ENCODE measurements at regions of chr1 and their contacts with region 1.

Region 1: GRCh38 chr1:25608488-25609178 is 8.0 kb upstream of the MAN1C1 start:
- DNase-seq: peak; percentile 81
- H3K4me3 Mint-ChIP-seq: no peak overlapping the region
- H3K27ac Mint-ChIP-seq: no peak overlapping the region
- H3K4me1 Mint-ChIP-seq: no peaks in the 10 kb centered on the region
- H3K27me3 Mint-ChIP-seq: peaks cover 59% of the 10 kb centered on the region
- CTCF ChIP-seq: peak; percentile 35

Region 2: GRCh38 chr1:25688390-25689161 is 79.9 kb after region 1 on chr1:
- CTCF ChIA-PET with region 1: no interaction called
- POLR2A ChIA-PET with region 1: no interaction called
- intact Hi-C with region 1: no loop called
- DNase-seq: peak; percentile 30
- H3K4me3 Mint-ChIP-seq: no peak overlapping the region
- H3K27ac Mint-ChIP-seq: no peak overlapping the region
- H3K4me1 Mint-ChIP-seq: no peaks in the 10 kb centered on the region
- H3K27me3 Mint-ChIP-seq: peaks cover 47% of the 10 kb centered on the region
- CTCF ChIP-seq: no peak

Region 3: DNA sequence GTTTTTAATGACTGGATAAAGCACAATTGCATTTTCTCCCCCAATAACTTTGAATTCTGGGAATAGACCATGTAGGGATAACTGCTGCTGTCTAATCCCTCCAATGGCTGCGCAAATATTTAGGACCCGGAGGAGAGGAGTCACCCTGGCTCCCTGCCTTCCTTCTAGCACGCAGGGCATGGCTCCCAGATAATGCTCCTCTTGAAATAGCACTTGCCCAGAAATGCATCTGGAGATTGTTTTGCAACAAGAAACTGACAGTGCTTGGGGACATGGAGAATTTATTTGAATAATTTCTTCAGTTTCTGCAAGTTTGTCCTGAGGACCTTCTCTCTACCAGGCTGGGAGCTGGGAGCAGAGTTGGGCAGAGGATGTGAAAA is 91.5 kb after region 1 on chr1:
- CTCF ChIA-PET with region 1: no interaction called
- POLR2A ChIA-PET with region 1: no interaction called
- intact Hi-C with region 1: no loop called
- DNase-seq: no peak
- H3K4me3 Mint-ChIP-seq: no peak overlapping the region
- H3K27ac Mint-ChIP-seq: no peak overlapping the region
- H3K4me1 Mint-ChIP-seq: peaks cover 9% of the 10 kb centered on the region
- H3K27me3 Mint-ChIP-seq: peaks cover 17% of the 10 kb centered on the region
- CTCF ChIP-seq: no peak

Region 4: DNA sequence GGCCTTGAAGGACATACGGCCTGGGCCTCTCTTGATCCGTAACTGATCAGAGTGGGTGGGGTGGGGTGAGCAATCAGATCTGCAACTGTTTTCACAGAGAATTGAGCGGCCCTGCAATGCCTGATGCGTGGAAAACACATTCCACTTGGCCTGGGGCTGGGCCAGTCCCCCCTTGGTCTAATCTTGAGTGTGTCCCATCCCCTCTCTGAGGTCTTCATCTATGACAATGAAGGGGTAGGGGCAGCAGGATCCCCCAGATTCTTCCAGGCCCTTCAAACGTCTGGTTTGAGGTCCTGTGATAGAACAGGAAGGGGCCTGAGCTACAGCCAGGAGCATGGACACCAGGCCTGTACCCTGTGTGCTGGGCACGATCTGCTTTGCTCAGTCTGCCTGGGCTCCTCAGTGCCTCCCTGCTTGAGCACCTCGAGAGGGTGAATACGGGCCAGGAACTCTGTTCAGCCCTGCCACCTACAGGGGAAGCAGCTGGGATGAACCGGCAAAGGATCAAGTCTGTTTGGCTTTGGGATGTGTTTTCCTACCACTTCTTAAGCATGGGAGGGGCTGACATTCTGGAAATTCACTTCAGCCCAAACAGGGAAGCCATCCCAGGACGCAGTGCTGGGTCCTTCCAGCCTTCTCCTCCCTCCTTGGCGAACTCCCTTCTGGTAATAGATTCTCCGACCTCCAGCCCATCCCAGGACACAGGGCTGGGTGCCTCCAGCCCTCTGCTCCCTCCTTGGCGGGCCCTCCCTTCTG is 135.4 kb after region 1 on chr1:
- CTCF ChIA-PET with region 1: no interaction called
- POLR2A ChIA-PET with region 1: no interaction called
- intact Hi-C with region 1: loop called (anchors 1 kb)
- DNase-seq: peak; percentile 45
- H3K4me3 Mint-ChIP-seq: no peak overlapping the region
- H3K27ac Mint-ChIP-seq: no peak overlapping the region
- H3K4me1 Mint-ChIP-seq: peaks cover 6% of the 10 kb centered on the region
- H3K27me3 Mint-ChIP-seq: peaks cover 32% of the 10 kb centered on the region
- CTCF ChIP-seq: peak; percentile 23

Region 5: DNA sequence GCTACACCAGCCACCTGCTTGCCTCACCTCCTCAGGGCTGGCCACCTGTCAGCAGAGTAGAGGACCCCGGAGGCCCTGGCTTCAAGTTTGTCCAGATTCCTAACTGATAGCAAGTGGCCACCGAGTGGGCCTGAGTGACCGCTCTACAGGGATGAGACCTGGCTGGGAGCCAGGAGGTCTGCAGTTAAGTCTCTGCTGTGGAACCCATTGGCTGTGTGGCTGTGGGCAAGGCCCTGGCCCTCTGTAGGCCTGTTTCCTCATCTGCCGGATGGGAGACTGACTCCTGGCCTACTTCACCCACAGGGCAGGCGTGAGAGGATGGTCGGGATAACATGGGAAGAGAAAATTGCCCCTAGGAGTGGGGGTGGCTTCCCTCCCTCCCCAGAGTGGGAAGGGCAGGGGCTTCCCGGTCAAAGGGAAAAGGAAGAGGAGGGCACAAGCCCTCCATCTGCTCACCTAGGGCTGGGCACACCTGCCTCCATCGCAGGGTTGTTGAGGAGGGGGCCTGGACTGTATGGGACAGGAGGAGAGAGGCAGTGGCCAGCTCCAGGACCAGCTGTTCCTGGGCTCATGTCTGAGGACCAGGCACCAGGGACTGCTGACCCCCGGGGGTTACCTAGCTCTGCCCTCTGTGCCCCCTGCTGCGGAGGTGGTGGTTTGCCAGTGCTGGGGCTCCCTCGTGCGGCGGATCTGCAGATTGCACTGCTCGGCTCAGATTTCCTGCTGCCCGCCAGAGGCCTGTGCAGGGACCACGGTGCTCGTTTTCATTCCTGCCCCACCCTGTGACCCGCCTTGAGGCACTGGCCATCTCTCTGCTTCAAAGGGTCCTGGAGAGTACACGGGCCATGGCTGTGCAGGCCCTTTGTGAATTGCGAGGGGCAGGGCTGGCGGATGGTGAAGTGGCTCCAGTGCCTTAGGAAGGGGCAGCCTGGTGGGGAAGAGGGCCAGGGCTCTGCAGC is 202.0 kb after region 1 on chr1:
- CTCF ChIA-PET with region 1: interaction called, 17 read pairs
- POLR2A ChIA-PET with region 1: no interaction called
- intact Hi-C with region 1: loop called (anchors 5 kb)
- DNase-seq: peak; percentile 50
- H3K4me3 Mint-ChIP-seq: no peak overlapping the region
- H3K27ac Mint-ChIP-seq: peak overlapping the region; percentile 70
- H3K4me1 Mint-ChIP-seq: peaks cover 8% of the 10 kb centered on the region
- H3K27me3 Mint-ChIP-seq: no peaks in the 10 kb centered on the region
- CTCF ChIP-seq: peak; percentile 92

Measured in MCF 10A (cell line).